GM13976 (cell line): ENCODE measurements at regions of chr7 and their contacts with region 1.

Region 1: GRCh38 chr7:142632291-142633134 is 116.8 kb upstream of the PRSS1 start:
- DNase-seq: peak; percentile 80
- CTCF ChIP-seq: peak; percentile 81

Region 2: GRCh38 chr7:142301923-142302550 is 330.5 kb before region 1 on chr7:
- in situ Hi-C with region 1: no loop called
- DNase-seq: peak; percentile 47
- CTCF ChIP-seq: peak; percentile 36

Region 3: GRCh38 chr7:142811154-142811737 is 178.7 kb after region 1 on chr7:
- in situ Hi-C with region 1: loop called (anchors 25 kb)
- DNase-seq: no peak
- CTCF ChIP-seq: peak; percentile 50

Region 4: GRCh38 chr7:143008007-143008901 is 375.7 kb after region 1 on chr7:
- in situ Hi-C with region 1: loop called (anchors 25 kb)
- DNase-seq: peak; percentile 64
- CTCF ChIP-seq: peak; percentile 90

Region 5: GRCh38 chr7:143214789-143215679 is 582.5 kb after region 1 on chr7:
- in situ Hi-C with region 1: loop called (anchors 25 kb)
- DNase-seq: peak; percentile 75
- CTCF ChIP-seq: peak; percentile 93